OCI-LY7 (cell line): ENCODE measurements at regions of chr1 and their contacts with region 1.

Region 1: DNA sequence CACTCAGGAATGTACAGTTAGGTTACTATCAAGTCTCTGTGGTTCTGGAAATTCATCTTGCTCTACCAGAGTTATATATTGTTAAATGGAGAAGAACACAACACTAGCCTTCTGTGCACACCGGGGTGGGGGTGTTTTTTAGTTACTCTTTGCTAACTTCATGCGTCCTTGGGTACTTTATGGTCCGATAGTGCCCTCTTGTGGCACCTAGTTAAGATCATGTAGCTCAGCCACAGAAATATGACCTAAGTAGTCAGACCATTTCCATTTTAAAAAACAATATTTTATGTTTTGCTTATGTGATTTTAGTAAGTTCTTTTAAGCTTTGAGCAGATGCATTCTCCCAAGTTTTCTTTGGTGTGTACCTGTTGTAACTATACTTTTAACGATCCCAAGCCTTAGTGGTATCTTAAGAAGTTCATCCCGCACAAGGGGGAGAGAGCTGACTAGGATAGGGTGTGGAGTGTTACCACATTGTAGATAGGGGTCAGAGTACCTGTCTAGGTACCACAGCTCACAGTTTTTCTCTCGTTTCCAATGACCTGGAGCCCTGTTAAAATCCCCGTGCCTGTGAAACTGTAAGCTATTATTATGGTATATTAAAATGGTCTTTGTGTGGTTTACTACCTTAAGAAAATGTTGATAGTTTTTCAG is 20.6 kb upstream of the SH3D21 start:
- DNase-seq: peak; percentile 88
- H3K4me3 ChIP-seq: no peak overlapping the region
- H3K27ac ChIP-seq: no peak overlapping the region
- H3K4me1 ChIP-seq: peaks cover 4% of the 10 kb centered on the region
- CTCF ChIP-seq: peak; percentile 96

Region 2: DNA sequence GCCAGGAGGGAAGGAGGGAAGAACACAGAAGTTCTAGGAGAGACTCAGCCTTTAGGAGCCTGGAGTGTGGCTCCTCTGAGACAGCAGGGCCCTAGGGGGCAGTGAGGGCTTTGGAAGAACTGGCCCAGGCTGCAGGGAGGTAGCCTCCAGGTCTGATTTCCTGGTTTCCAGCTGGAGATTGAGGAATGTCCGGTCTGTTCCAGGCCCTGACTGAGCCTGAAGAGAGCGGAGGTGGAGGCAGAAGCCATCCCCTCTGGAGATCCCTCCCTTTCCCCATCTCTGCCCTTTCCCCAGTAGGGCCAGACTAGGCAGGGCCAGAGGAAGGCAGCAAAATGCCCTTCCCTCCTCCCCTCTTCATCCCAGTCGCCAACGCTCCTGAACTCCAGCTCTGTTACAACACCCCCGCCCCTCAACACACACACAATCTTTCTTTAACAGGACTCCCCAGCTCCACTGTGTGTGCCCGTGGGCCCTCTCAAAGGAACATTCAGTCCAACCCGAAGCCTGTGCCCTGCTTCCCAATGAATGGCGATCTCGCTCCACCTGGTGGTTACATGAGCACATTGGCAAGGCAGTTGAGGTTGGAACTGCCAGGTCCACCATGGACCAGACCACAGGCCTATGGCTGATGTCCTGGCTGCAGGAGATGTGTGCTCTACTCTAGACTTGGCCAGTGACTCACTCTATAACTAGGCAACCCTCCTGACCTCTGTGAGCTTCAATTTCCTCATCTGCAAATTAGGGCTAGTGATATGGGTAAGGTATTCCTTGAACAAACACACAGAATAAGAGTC is 97.6 kb before region 1 on chr1:
- CTCF ChIA-PET with region 1: interaction called, 5 read pairs
- POLR2A ChIA-PET with region 1: no interaction called
- intact Hi-C with region 1: loop called (anchors 1 kb)
- DNase-seq: peak; percentile 89
- H3K4me3 ChIP-seq: no peak overlapping the region
- H3K27ac ChIP-seq: no peak overlapping the region
- H3K4me1 ChIP-seq: peaks cover 5% of the 10 kb centered on the region
- CTCF ChIP-seq: peak; percentile 96

Region 3: GRCh38 chr1:36664571-36665287 is 379.2 kb after region 1 on chr1:
- CTCF ChIA-PET with region 1: no interaction called
- POLR2A ChIA-PET with region 1: no interaction called
- intact Hi-C with region 1: no loop called
- DNase-seq: no peak
- H3K4me3 ChIP-seq: no peak overlapping the region
- H3K27ac ChIP-seq: no peak overlapping the region
- H3K4me1 ChIP-seq: peaks cover 4% of the 10 kb centered on the region
- CTCF ChIP-seq: no peak